Mammary epithelial cell (primary cell): ENCODE measurements at regions of chr9 and their contacts with region 1.

Region 1: GRCh38 chr9:92634712-92635605 is 35.0 kb downstream of the IPPK start:
- DNase-seq: peak; percentile 44
- H3K4me3 ChIP-seq: no peak overlapping the region
- H3K27ac ChIP-seq: no peak overlapping the region
- H3K4me1 ChIP-seq: no peaks in the 10 kb centered on the region
- H3K27me3 ChIP-seq: no peaks in the 10 kb centered on the region
- CTCF ChIP-seq: peak; percentile 94 to 98

Region 2: GRCh38 chr9:92133949-92134604 is 500.9 kb before region 1 on chr9:
- CTCF ChIA-PET with region 1: no interaction called
- dilution Hi-C with region 1: no loop called
- in situ Hi-C with region 1: loop called (anchors 10 to 25 kb)
- intact Hi-C with region 1: loop called (anchors 5 kb)
- DNase-seq: peak; percentile 80
- H3K4me3 ChIP-seq: peak overlapping the region in 1 of 3 experiments; percentile 31
- H3K27ac ChIP-seq: no peak overlapping the region
- H3K4me1 ChIP-seq: peaks cover 11% of the 10 kb centered on the region
- H3K27me3 ChIP-seq: no peaks in the 10 kb centered on the region
- CTCF ChIP-seq: peak; percentile 94 to 98

Region 3: GRCh38 chr9:92325269-92325990 is 309.5 kb before region 1 on chr9 and contains the starts of genes CENPP and NOL8:
- CTCF ChIA-PET with region 1: no interaction called
- dilution Hi-C with region 1: no loop called
- in situ Hi-C with region 1: loop called (anchors 10 kb)
- intact Hi-C with region 1: loop called (anchors 5 kb)
- DNase-seq: peak; percentile 91
- H3K4me3 ChIP-seq: peak within 1 kb of the TSS; percentile 80 to 99 (median 93)
- H3K27ac ChIP-seq: peak within 1 kb of the TSS; percentile 98
- H3K4me1 ChIP-seq: peaks cover 27% of the 10 kb centered on the region
- H3K27me3 ChIP-seq: no peaks in the 10 kb centered on the region
- CTCF ChIP-seq: no peak
- total RNA-seq, gene CENPP: 3.0 to 7.5 TPM
- total RNA-seq, gene NOL8: 21.8 to 42.4 TPM

Region 4: GRCh38 chr9:92342825-92343488 is 292.0 kb before region 1 on chr9:
- CTCF ChIA-PET with region 1: no interaction called
- dilution Hi-C with region 1: no loop called
- in situ Hi-C with region 1: no loop called
- intact Hi-C with region 1: loop called (anchors 5 kb)
- DNase-seq: no peak
- H3K4me3 ChIP-seq: no peak overlapping the region
- H3K27ac ChIP-seq: no peak overlapping the region
- H3K4me1 ChIP-seq: no peaks in the 10 kb centered on the region
- H3K27me3 ChIP-seq: no peaks in the 10 kb centered on the region
- CTCF ChIP-seq: no peak

Region 5: DNA sequence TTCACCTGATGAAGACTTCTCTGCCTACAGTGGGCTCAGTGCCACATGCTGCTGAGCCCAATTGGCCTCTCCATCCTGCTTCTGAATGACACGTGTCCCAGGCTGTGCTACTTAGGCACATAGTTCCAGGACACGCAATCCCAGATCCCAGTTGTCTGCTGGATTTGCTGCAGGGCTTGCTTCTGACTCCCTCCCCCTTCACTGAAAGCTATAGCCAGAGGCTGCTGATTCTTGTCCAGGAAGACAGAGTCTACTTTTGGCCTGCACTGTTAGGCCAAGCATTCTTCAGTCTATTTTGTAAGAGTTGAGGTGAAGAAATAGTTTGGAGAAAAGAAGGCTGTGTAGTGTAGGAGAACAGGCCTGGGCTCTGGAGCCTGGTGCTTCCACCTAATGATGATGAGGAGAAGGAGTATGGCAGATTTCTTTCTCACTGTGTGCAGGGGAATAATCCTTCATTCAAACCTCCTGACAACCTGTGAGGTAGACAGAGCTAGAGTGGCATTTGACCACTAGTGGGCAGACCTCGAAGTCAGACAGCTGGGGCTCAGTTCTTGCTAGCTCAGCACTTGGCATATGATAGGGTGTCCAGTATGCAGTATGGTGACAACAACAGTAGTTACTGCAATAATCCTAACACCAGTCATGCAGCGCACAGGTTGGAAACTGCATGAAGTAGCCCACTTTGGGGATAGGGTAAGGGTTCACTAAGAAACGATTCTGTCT is 133.1 kb before region 1 on chr9:
- CTCF ChIA-PET with region 1: no interaction called
- dilution Hi-C with region 1: no loop called
- in situ Hi-C with region 1: no loop called
- intact Hi-C with region 1: loop called (anchors 5 kb)
- DNase-seq: peak; percentile 38
- H3K4me3 ChIP-seq: no peak overlapping the region
- H3K27ac ChIP-seq: no peak overlapping the region
- H3K4me1 ChIP-seq: peaks cover 29% of the 10 kb centered on the region
- H3K27me3 ChIP-seq: no peaks in the 10 kb centered on the region
- CTCF ChIP-seq: peak; percentile 62 to 73

Region 6: DNA sequence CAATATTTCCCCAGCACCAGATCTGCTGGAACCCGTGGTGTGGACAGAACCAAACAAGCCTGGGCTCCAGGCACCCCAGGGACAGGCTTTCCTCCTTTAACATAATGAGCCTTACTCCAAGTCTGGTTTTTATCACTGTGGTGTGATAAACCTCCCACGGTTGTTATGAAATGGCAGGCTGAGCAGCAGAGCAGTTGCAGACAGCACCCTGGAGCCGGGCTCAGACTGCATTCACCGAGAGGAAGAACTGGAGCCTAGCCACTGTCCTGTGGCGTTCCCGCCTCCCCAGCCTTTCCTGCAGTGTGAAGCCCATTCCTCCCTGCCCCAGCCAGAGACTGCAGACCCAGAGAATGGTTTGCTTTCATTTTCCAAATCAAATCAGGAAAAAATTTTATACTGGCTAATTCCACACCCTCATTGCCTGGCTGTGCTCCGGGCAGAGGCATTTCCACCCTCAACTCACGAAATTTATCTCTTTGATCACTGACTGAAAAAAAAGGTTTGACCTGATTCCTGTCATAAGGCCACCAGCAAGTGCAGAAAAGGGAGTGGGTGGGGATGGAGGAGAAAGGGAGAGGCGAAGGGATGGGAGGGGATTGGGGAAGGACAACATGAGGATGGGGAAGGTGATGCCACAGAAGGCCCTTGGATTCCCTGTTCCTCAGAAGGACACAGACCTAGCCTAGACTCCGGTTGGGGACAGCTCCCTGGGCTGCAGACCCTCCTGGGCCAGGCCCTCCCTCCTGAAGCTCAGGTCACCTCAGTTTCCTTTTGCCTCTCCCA is 16.1 kb after region 1 on chr9:
- CTCF ChIA-PET with region 1: no interaction called
- dilution Hi-C with region 1: no loop called
- in situ Hi-C with region 1: no loop called
- intact Hi-C with region 1: no loop called
- DNase-seq: no peak
- H3K4me3 ChIP-seq: no peak overlapping the region
- H3K27ac ChIP-seq: no peak overlapping the region
- H3K4me1 ChIP-seq: peaks cover 16% of the 10 kb centered on the region
- H3K27me3 ChIP-seq: no peaks in the 10 kb centered on the region
- CTCF ChIP-seq: no peak